ENCODE measurements at regions of chr6 and their contacts with region 1.

Region 1: DNA sequence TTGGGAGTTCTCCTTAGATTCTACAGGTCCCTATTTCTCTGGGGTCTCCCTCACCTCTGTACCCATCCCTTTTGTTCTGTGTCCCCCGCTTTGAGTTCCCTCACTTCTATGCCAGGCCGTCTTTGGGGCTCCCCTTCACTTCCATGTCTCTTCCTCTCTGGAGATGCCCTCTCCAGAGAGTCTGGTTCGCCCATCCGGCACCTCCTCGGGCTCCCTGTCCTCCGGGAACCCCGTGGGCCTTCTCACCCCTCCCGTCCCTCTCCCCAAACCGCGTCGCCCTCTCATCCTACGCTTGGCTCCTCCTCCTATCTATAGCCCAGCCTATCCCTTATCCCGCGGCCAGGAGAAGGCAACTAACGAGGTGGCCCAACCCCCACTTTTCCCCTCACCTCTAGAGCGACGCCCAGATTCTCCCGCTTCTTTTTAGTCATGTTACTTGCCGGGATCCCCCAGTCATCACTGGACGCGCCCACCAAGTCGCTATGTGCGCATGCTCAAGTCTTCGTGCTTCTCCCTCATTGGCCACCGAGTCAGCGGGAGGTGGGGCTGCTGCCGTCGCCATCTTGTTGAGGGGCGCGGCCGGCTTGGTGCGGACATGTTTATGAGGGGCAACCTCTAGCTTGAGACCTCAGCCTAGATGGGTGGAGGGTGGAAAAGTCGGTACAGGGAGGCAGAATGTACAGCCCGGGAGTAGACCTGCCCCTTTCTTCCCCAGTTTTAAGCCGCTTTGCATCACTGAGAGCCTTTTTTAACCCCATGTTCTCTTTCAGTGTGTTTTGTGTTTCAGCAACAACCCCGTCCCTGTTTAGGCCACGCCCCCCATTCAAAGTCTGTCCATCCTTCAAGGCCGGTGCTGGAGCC is at the start of gene CCDC167:
- DNase-seq: peak; percentile 99
- ATAC-seq: peak; percentile 82
- H3K4me3 Mint-ChIP-seq: peak within 1 kb of the TSS; percentile 88
- H3K27ac Mint-ChIP-seq: peak within 1 kb of the TSS; percentile 96
- H3K4me1 Mint-ChIP-seq: peaks cover 89% of the 10 kb centered on the region
- H3K27me3 Mint-ChIP-seq: no peaks in the 10 kb centered on the region
- total RNA-seq, gene CCDC167: 55.3 to 60.3 TPM

Region 2: GRCh38 chr6:37051138-37052026 is 448.3 kb before region 1 on chr6:
- CTCF ChIA-PET with region 1: no interaction called
- POLR2A ChIA-PET with region 1: no interaction called
- intact Hi-C with region 1: loop called in 1 of 2 experiments (anchors 5 kb)
- DNase-seq: peak; percentile 95
- ATAC-seq: peak; percentile 43
- H3K4me3 Mint-ChIP-seq: peak overlapping the region; percentile 79
- H3K27ac Mint-ChIP-seq: peak overlapping the region; percentile 100
- H3K4me1 Mint-ChIP-seq: peaks cover 55% of the 10 kb centered on the region
- H3K27me3 Mint-ChIP-seq: no peaks in the 10 kb centered on the region

Region 3: DNA sequence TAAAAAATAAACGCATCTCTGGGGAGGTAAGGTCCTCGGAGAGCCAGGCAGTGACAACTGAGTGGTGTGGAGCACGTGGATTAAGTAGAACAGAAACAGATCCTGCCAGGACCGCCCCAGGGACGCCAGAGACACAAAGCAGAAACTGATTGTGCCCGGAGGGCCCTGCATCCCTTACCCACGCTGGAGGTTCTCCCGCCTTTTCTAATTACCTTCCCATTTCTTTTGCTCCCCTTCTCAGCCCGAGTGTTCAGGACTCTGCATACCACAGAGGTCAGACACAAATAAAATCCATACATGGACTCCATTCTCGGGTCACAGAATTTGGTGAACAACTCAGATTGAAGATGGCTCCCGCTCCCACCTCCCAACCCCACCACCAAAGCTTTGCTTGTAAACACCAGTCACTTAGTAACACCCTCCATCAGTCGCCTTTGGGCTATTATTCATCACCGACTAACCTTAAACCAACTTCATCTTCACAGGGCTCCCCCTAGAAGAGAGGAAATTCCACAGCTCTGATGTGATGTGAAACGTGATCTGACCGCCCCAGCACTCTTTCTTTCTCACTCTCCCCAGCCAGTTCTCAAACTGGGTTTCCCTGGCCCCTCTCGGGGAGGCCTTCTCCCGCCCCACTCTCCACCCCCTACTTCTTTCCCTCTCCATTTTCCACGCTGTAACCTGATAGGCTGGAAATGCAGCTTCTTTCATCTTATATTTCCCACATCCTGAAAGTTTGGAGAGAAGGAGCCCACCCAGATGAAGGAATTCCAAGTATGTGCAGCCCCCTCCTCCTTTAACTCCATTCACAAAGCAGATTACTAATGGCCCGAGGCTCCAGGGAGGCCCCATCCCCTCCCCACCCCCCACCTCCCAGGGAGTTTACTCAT is 362.2 kb before region 1 on chr6:
- CTCF ChIA-PET with region 1: no interaction called
- POLR2A ChIA-PET with region 1: no interaction called
- intact Hi-C with region 1: no loop called
- DNase-seq: peak; percentile 71
- ATAC-seq: peak; percentile 82
- H3K4me3 Mint-ChIP-seq: peak overlapping the region; percentile 43
- H3K27ac Mint-ChIP-seq: peak overlapping the region; percentile 94
- H3K4me1 Mint-ChIP-seq: peaks cover 46% of the 10 kb centered on the region
- H3K27me3 Mint-ChIP-seq: no peaks in the 10 kb centered on the region

Region 4: DNA sequence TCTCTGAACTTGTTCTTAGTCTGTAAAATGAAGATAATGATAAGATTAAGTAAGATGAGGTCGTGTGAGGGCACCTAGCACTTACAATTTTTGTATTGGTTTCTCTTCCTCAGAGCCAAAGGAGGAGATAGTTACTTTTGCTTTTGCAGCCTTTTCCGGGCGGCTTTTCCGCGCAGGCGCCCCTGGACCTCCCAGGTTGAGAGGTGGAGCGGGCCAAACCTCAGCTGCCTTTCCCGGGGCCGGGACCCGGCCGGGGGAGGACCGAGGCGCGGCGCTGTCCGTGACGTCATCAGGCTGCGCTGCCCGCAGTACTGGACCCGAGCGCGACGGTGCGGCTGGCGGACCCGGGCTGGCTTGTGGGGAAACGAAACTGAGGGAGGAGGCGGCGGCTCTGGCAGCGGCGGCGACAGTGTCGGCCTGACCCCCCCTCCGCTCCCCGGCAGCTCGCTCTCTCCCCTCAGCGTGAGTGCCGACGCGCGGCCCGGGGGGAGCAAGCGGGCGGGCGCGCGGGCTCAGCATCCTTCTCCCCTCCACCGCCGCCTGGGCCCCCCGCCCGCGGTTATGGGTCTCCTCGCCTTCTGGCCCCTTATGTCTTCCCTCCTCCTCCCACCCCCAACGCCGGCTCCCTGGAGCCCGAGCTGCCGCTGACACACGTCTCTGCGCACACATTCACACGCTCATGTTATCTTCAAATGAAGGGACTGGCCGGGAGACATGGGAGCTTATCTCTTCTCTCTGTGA is 66.6 kb before region 1 on chr6 and contains the start of gene CMTR1:
- CTCF ChIA-PET with region 1: interaction called, 5 read pairs
- POLR2A ChIA-PET with region 1: no interaction called
- intact Hi-C with region 1: loop called in 1 of 2 experiments (anchors 1 kb)
- DNase-seq: peak; percentile 98
- ATAC-seq: peak; percentile 88
- H3K4me3 Mint-ChIP-seq: peak within 1 kb of the TSS; percentile 98
- H3K27ac Mint-ChIP-seq: peak within 1 kb of the TSS; percentile 99
- H3K4me1 Mint-ChIP-seq: peaks cover 36% of the 10 kb centered on the region
- H3K27me3 Mint-ChIP-seq: peaks cover 4% of the 10 kb centered on the region
- total RNA-seq, gene CMTR1: 65.3 to 74.6 TPM

Region 5: DNA sequence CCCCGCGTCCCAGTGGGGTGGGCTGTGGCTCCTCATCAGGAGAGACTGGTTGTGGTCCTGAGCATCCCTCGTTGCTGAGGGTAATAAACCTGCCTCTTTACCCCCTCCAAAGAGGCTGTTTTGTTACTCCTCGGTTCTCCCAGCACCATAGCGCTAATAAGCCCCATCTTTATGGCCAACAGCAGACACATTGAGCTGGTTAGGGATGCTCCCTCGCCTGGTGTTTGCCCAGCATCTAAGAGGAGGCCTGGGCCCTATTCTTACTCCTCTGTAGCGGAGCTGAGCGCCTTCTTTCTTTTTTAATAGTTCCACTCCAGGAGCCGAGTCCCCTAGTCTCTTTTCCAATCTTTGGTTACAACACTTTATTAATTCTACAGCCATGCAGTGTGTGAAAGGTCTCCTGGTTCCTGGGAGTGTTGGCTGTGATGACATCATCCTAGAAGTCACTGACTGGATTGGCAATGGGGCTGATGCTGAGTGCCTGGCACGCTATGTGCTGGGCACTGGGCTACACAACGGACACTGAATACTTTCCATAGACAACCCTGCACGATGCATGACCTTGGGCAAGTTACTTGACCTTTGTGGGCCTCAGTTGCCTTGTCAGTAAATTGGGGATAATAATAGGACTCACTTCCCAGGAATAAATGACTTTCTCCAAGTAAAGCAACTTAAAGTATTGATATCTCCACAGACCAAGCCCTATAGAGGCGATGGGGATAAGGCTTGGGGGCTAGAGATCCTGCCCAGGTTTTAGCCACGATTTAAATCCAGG is 50.7 kb after region 1 on chr6:
- CTCF ChIA-PET with region 1: interaction called, 3 read pairs
- POLR2A ChIA-PET with region 1: no interaction called
- intact Hi-C with region 1: loop called (anchors 1 kb)
- DNase-seq: no peak
- ATAC-seq: no peak
- H3K4me3 Mint-ChIP-seq: no peak overlapping the region
- H3K27ac Mint-ChIP-seq: no peak overlapping the region
- H3K4me1 Mint-ChIP-seq: peaks cover 47% of the 10 kb centered on the region
- H3K27me3 Mint-ChIP-seq: peaks cover 2% of the 10 kb centered on the region

Region 6: DNA sequence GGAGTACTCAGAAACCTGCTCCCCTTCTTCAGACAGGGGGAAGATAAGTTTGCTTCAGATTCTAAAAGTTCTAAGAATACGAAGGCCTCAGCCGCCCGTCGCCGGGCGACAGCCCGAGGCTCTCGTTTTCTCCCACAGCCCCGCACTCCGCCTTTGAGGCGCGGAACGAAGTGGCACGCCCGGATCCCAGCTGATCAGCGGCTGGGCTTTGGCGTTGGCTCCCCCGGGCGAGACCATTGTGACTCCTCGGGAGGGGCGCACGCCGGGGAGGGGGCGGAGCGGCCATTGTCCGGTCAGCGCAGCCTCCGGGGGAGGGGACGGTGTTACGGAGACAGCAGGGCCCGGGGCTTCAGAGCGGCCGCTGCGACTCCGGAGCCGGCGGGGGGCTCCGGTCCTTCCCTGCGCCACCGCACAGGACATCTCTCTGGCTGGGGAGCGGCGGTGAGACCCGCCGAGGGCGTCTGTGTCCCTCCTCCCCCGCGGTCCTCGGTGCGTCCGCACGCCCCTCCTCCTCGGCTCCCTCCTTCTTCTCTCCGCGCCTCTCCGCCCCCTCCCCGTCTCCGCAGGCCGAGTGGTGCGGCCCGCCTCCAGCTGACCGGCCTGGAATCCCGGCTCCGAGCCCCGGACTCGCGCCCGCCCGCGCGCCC is 319.6 kb after region 1 on chr6 and contains the start of gene ZFAND3:
- CTCF ChIA-PET with region 1: no interaction called
- POLR2A ChIA-PET with region 1: no interaction called
- intact Hi-C with region 1: loop called in 1 of 2 experiments (anchors 5 kb)
- DNase-seq: peak; percentile 97
- ATAC-seq: peak; percentile 80
- H3K4me3 Mint-ChIP-seq: peak within 1 kb of the TSS; percentile 98
- H3K27ac Mint-ChIP-seq: peak within 1 kb of the TSS; percentile 96
- H3K4me1 Mint-ChIP-seq: peaks cover 51% of the 10 kb centered on the region
- H3K27me3 Mint-ChIP-seq: no peaks in the 10 kb centered on the region
- total RNA-seq, gene ZFAND3: 34.5 to 47.8 TPM